ENCODE measurements at regions of chr17 and their contacts with region 1.

Region 1: DNA sequence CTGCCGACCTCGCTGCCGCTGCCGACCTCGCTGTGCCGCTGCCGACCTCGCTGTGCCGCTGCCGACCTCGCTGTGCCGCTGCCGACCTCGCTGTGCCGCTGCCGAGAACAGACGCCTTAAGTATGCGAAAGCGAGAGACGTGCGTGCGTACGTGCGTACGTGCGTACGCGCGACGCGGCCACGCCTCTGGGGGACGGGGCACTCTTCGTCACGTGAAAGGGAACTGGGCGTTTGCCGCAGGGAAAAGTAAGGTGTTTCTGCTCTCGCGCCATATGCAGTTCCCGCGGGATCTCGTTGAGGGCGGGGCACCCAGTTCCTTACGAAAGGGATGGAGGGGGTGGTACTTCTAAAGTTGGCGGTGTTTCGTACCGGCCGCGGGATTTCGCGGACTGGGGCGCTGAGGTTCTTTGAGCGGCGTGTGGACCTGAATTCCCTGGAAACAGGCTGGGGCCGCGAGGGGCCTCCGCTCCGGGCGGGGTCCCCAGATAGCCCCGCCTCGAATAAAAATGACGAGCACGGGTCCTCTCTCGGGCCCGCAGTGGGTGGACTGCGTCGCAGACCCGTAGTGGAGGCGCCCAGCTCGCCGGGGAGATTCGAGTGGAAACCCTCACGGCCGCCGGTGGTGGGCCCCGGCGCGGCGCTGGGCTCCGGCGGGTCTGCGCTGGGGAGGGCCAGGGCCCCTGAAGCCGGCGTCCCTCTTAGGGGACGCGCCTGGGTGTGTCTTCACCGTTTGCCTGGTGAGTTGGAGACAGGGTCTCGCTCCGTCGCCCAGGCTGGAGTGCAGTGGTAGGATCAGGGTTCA is at the start of gene EIF4A3:
- DNase-seq: peak; percentile 94 to 99
- H3K4me3 ChIP-seq: peak within 1 kb of the TSS; percentile 95 to 99
- H3K27ac ChIP-seq: peak within 1 kb of the TSS; percentile 83 to 92
- H3K4me1 ChIP-seq: peaks cover 0 to 16% of the 10 kb centered on the region in 2 donors
- H3K27me3 ChIP-seq: no peaks in the 10 kb centered on the region
- CTCF ChIP-seq: no peak
- total RNA-seq, gene EIF4A3: 78.9 TPM

Region 2: DNA sequence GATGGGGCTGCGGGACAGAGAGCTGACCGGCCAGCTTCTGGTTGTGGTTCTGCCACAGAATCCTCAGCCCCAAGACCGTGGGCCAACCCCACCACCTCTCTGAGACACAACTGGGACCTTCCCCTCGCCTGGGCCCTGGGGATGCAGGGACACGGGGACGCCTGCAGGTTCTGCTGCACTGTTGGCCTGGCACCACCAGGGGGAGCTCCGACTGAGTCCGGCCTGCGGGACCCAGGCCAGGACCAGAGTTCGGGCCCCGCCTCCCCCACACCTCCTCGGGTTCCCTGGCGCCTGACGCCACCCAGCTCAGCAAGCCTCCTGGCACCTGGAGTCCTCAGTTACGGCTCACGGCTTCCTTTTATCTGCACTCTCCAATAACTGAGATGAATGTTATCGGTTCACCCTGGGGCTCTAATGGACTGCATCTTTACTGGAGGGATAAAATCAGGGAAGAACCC is 138.8 kb before region 1 on chr17:
- intact Hi-C with region 1: loop called (anchors 5 kb)
- DNase-seq: peak in 1 of 2 donors; percentile 86
- H3K4me3 ChIP-seq: no peak overlapping the region
- H3K27ac ChIP-seq: no peak overlapping the region
- H3K4me1 ChIP-seq: peaks cover 0 to 9% of the 10 kb centered on the region in 2 donors
- H3K27me3 ChIP-seq: no peaks in the 10 kb centered on the region
- CTCF ChIP-seq: peak; percentile 95 to 97 (median 95)

Region 3: GRCh38 chr17:80029258-80029974 is 117.8 kb before region 1 on chr17:
- intact Hi-C with region 1: loop called (anchors 2 kb)
- DNase-seq: peak; percentile 44 to 93
- H3K4me3 ChIP-seq: peak overlapping the region; percentile 16 to 30
- H3K27ac ChIP-seq: peak overlapping the region; percentile 71 to 75
- H3K4me1 ChIP-seq: peaks cover 11 to 39% of the 10 kb centered on the region in 2 donors
- H3K27me3 ChIP-seq: no peaks in the 10 kb centered on the region
- CTCF ChIP-seq: no peak

Region 4: DNA sequence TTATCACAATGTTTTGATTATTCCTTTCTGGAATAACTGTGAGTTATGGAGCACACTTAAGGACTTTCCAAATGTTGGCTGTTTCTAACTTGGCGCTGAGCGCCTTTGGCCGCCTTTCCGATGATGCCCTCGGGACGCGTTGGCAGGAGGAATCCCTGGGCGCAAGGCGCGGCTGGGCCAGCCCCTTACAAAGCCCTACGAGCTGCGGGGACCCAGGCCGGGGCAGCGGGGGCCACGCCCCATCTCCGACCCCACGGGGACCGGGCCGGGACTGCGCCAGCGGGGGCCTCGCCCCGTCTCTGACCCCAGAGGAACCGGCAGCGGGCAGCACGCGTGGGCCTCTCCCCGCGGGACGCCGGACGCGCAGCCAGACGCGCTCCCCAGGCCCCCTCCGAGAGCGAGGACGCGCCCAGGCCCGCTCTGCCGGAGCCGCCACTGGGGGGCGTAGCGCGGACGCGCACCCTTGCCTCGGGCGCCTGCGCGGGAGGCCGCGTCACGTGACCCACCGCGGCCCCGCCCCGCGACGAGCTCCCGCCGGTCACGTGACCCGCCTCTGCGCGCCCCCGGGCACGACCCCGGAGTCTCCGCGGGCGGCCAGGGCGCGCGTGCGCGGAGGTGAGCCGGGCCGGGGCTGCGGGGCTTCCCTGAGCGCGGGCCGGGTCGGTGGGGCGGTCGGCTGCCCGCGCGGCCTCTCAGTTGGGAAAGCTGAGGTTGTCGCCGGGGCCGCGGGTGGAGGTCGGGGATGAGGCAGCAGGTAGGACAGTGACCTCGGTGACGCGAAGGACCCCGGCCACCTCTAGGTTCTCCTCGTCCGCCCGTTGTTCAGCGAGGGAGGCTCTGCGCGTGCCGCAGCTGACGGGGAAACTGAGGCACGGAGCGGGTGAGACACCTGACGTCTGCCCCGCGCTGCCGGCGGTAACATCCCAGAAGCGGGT is 46.0 kb before region 1 on chr17 and contains the start of gene GAA:
- intact Hi-C with region 1: loop called (anchors 1 kb)
- DNase-seq: peak; percentile 24 to 89
- H3K4me3 ChIP-seq: peak within 1 kb of the TSS; percentile 80 to 98
- H3K27ac ChIP-seq: peak within 1 kb of the TSS; percentile 81 to 93
- H3K4me1 ChIP-seq: peaks cover 3 to 7% of the 10 kb centered on the region in 2 donors
- H3K27me3 ChIP-seq: no peaks in the 10 kb centered on the region
- CTCF ChIP-seq: peak; percentile 41 to 95 (median 66)
- total RNA-seq, gene GAA: 91.6 TPM

Region 5: DNA sequence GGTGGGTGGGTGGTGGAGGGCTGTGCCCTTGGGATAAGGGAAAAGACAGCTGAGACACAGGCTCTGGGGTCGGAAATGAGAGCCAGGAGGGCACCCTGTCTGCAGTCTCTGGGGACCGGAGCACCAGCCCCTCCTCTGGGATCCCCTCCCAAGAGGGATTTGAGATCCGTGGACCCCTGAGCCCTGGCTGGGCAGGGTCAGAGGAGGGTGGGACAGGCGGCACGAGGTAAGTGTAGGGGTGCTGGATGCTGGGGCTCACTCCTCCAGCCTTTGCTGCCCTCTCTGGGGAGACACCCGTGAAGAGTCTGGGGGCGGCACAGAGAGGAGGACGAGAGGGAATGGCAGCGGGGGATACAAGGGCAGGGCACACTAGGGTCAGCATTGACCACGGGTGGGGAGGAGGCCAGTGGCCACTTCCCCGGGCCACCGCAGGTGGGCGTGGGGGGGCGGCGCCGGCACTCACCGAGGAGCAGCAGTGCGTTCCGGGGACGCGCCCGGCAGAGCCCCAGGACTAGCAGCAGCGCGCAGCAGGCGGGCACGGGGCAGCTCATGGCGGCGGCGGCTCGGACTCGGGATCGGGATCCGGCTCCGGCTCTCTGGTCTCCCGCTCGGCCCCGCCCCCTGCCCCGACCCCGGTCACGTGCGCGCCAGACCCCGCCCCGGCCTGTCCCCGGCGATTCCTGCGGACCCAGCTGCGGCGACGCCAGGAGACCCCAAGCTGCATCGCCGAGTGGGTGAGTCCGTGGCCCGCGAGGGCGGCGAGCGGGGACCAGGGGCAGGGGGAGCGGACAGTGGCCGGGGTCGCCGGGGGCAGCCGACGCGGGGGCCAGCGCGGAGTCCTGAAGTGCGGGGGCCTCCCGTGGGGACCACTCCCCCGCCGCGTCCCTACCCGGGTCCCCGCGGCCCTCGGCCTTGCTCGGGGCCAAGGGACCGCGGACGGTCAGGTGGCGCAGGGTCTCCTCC is 72.8 kb after region 1 on chr17 and contains the starts of genes SGSH and SLC26A11:
- intact Hi-C with region 1: loop called (anchors 5 kb)
- DNase-seq: peak; percentile 37 to 88
- H3K4me3 ChIP-seq: peak within 1 kb of the TSS; percentile 96 to 97
- H3K27ac ChIP-seq: peak within 1 kb of the TSS; percentile 82 to 85
- H3K4me1 ChIP-seq: peaks cover 3 to 9% of the 10 kb centered on the region in 2 donors
- H3K27me3 ChIP-seq: no peaks in the 10 kb centered on the region
- CTCF ChIP-seq: no peak
- total RNA-seq, gene SGSH: 50.9 TPM
- total RNA-seq, gene SLC26A11: 25.8 TPM

Region 6: GRCh38 chr17:80263253-80264204 is 116.3 kb after region 1 on chr17:
- intact Hi-C with region 1: loop called (anchors 5 kb)
- DNase-seq: peak; percentile 71 to 89
- H3K4me3 ChIP-seq: peak overlapping the region; percentile 26 to 57
- H3K27ac ChIP-seq: peak overlapping the region; percentile 72 to 97
- H3K4me1 ChIP-seq: peaks cover 15 to 28% of the 10 kb centered on the region in 2 donors
- H3K27me3 ChIP-seq: no peaks in the 10 kb centered on the region
- CTCF ChIP-seq: peak in 1 of 3 experiments; percentile 8

Region 7: DNA sequence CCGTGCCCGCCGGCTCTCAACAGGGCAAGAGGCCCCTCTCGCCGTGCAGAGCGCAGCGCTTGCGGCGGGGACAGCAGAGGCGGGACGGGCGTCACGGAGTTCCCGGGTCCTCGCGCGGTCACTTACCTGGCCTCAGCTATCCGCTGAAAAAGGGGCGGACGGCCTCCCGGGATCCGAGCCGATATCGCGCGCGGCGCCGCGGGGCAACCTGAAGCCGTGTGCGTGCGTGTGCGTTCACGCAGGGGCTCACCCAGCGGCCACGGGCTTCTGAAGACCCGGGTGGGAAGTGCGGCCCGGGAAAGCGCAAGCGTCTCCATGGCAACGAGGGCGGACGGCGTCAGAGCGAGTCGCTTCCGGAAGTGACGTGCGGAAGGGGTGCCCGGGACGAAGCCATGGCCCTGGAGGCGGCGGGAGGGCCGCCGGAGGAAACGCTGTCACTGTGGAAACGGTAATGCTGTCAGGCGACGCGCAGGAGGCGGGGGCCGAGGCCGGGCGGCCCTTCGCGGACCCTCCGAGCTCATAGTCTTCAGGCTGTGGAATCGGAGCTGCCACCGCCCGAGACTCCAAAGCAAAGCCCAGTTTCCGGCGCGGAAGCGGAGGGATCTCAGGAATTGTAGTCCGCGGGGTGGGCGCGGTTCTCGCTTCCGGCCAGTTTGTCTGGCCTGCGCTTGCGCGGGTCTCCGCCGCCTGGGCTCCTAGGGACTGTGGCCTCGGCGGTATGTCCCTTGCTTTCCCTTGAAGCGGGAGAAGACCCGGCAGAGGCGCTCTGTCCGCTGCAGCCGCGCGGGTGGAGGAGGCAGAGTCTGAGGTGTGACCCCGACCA is 267.8 kb after region 1 on chr17 and contains the start of gene ENDOV:
- intact Hi-C with region 1: loop called (anchors 5 kb)
- DNase-seq: peak; percentile 51 to 96
- H3K4me3 ChIP-seq: peak within 1 kb of the TSS; percentile 93 to 98
- H3K27ac ChIP-seq: peak within 1 kb of the TSS; percentile 91 to 98
- H3K4me1 ChIP-seq: peaks cover 4 to 17% of the 10 kb centered on the region in 2 donors
- H3K27me3 ChIP-seq: no peaks in the 10 kb centered on the region
- CTCF ChIP-seq: no peak
- total RNA-seq, gene ENDOV: 18.0 TPM